ENCODE measurements at regions of chr1 and their contacts with region 1.

Region 1: GRCh38 chr1:116485071-116485735 is 85.6 kb downstream of the CD58 start:
- DNase-seq: peak; percentile 95
- ATAC-seq: peak; percentile 96
- H3K4me3 Mint-ChIP-seq: no peak overlapping the region
- H3K27ac Mint-ChIP-seq: no peak overlapping the region
- H3K4me1 Mint-ChIP-seq: peaks cover 4% of the 10 kb centered on the region
- H3K27me3 Mint-ChIP-seq: no peaks in the 10 kb centered on the region
- CTCF ChIP-seq: peak; percentile 94

Region 2: GRCh38 chr1:116131866-116132605 is 353.2 kb before region 1 on chr1:
- CTCF ChIA-PET with region 1: interaction called, 11 read pairs
- POLR2A ChIA-PET with region 1: no interaction called
- intact Hi-C with region 1: no loop called
- DNase-seq: no peak
- ATAC-seq: no peak
- H3K4me3 Mint-ChIP-seq: no peak overlapping the region
- H3K27ac Mint-ChIP-seq: no peak overlapping the region
- H3K4me1 Mint-ChIP-seq: peaks cover 34% of the 10 kb centered on the region
- H3K27me3 Mint-ChIP-seq: peaks cover 10% of the 10 kb centered on the region
- CTCF ChIP-seq: no peak

Region 3: GRCh38 chr1:116168277-116169097 is 316.7 kb before region 1 on chr1:
- CTCF ChIA-PET with region 1: interaction called, 15 read pairs
- POLR2A ChIA-PET with region 1: no interaction called
- intact Hi-C with region 1: no loop called
- DNase-seq: peak; percentile 89
- ATAC-seq: peak; percentile 99
- H3K4me3 Mint-ChIP-seq: peak overlapping the region; percentile 67
- H3K27ac Mint-ChIP-seq: peak overlapping the region; percentile 74
- H3K4me1 Mint-ChIP-seq: peaks cover 9% of the 10 kb centered on the region
- H3K27me3 Mint-ChIP-seq: no peaks in the 10 kb centered on the region
- CTCF ChIP-seq: peak; percentile 95

Region 4: DNA sequence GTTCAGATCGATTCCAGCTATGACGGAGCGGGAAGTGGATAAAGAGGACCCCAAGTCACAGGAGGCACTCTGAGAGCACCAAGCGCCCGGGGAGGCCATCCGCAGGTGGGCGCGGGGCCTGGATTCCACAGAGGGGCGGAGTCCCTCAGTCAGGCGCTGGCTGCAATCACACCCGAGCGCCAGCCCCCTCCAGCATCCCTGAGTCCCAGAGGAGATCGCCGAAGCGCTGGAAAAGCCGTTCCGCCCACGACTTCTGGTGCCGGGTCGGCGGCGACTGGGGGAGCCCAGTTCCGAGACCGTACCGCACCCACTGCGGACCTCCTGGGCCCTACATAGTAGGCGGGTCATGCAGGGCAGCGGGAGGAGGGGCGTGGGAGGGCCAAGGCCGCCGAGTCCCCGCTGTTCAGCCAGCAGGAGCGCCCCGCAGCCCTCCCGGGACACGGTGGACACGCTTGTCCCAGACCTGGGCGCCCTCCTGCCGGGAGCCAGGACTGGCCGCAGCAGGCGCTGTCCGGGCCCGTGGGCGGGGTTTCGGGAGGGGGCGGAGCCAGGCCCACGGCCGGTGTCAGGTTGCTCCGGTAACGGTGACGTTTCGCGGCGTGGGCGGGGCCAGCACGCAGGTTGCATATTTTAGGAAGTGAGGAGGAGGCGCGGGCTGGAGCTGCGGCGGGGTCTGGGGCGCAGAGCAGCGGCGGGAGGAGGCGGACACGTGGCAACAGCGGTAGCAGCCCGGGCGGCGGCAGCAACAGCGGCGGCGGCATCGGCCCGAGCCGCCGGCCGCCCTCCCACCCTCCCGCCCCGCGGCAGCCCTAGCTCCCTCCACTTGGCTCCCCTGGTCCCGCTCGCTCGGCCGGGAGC is 112.4 kb before region 1 on chr1 and contains the start of gene ATP1A1:
- CTCF ChIA-PET with region 1: interaction called, 12 read pairs
- POLR2A ChIA-PET with region 1: no interaction called
- intact Hi-C with region 1: no loop called
- DNase-seq: peak; percentile 99
- ATAC-seq: peak; percentile 66
- H3K4me3 Mint-ChIP-seq: peak within 1 kb of the TSS; percentile 97
- H3K27ac Mint-ChIP-seq: peak within 1 kb of the TSS; percentile 94
- H3K4me1 Mint-ChIP-seq: peaks cover 33% of the 10 kb centered on the region
- H3K27me3 Mint-ChIP-seq: peaks cover 2% of the 10 kb centered on the region
- CTCF ChIP-seq: no peak
- total RNA-seq, gene ATP1A1: 201 to 202 TPM

Region 5: GRCh38 chr1:116418091-116418830 is 66.9 kb before region 1 on chr1:
- CTCF ChIA-PET with region 1: interaction called, 18 read pairs
- POLR2A ChIA-PET with region 1: no interaction called
- intact Hi-C with region 1: no loop called
- DNase-seq: peak; percentile 91
- ATAC-seq: peak; percentile 95
- H3K4me3 Mint-ChIP-seq: peak overlapping the region; percentile 91
- H3K27ac Mint-ChIP-seq: peak overlapping the region; percentile 91
- H3K4me1 Mint-ChIP-seq: peaks cover 43% of the 10 kb centered on the region
- H3K27me3 Mint-ChIP-seq: no peaks in the 10 kb centered on the region
- CTCF ChIP-seq: no peak

Region 6: GRCh38 chr1:116472431-116472961 is 12.7 kb before region 1 on chr1:
- CTCF ChIA-PET with region 1: interaction called, 12 read pairs
- POLR2A ChIA-PET with region 1: no interaction called
- intact Hi-C with region 1: no loop called
- DNase-seq: no peak
- ATAC-seq: no peak
- H3K4me3 Mint-ChIP-seq: no peak overlapping the region
- H3K27ac Mint-ChIP-seq: no peak overlapping the region
- H3K4me1 Mint-ChIP-seq: no peaks in the 10 kb centered on the region
- H3K27me3 Mint-ChIP-seq: no peaks in the 10 kb centered on the region
- CTCF ChIP-seq: no peak

Region 7: GRCh38 chr1:116544588-116545358 is 59.6 kb after region 1 on chr1:
- CTCF ChIA-PET with region 1: no interaction called
- POLR2A ChIA-PET with region 1: no interaction called
- intact Hi-C with region 1: no loop called
- DNase-seq: peak; percentile 44
- ATAC-seq: peak; percentile 66
- H3K4me3 Mint-ChIP-seq: peak overlapping the region; percentile 40
- H3K27ac Mint-ChIP-seq: peak overlapping the region; percentile 93
- H3K4me1 Mint-ChIP-seq: peaks cover 39% of the 10 kb centered on the region
- H3K27me3 Mint-ChIP-seq: no peaks in the 10 kb centered on the region
- CTCF ChIP-seq: no peak